ENCODE measurements at regions of chr9 and their contacts with region 1.

Region 1: GRCh38 chr9:72509635-72510034 is 11.8 kb upstream of the TMC1 start:
- DNase-seq: peak; percentile 51
- ATAC-seq: peak; percentile 54
- H3K4me3 ChIP-seq: no peak overlapping the region
- H3K27ac ChIP-seq: no peak overlapping the region
- H3K4me1 ChIP-seq: peaks cover 1% of the 10 kb centered on the region; the same call in 1 of the 2 replicates
- H3K27me3 ChIP-seq: no peaks in the 10 kb centered on the region
- CTCF ChIP-seq: no peak
- POLR2A ChIP-seq: no peak
- RAD21 ChIP-seq: no peak

Region 2: GRCh38 chr9:71518045-71518827 is 991.4 kb before region 1 on chr9:
- CTCF ChIA-PET with region 1: no interaction called
- POLR2A ChIA-PET with region 1: no interaction called
- dilution Hi-C with region 1: no loop called
- in situ Hi-C with region 1: no loop called
- intact Hi-C with region 1: no loop called
- DNase-seq: no peak
- ATAC-seq: no peak
- H3K4me3 ChIP-seq: no peak overlapping the region
- H3K27ac ChIP-seq: no peak overlapping the region
- H3K4me1 ChIP-seq: no peaks in the 10 kb centered on the region
- H3K27me3 ChIP-seq: no peaks in the 10 kb centered on the region
- CTCF ChIP-seq: no peak
- POLR2A ChIP-seq: no peak
- RAD21 ChIP-seq: no peak

Region 3: DNA sequence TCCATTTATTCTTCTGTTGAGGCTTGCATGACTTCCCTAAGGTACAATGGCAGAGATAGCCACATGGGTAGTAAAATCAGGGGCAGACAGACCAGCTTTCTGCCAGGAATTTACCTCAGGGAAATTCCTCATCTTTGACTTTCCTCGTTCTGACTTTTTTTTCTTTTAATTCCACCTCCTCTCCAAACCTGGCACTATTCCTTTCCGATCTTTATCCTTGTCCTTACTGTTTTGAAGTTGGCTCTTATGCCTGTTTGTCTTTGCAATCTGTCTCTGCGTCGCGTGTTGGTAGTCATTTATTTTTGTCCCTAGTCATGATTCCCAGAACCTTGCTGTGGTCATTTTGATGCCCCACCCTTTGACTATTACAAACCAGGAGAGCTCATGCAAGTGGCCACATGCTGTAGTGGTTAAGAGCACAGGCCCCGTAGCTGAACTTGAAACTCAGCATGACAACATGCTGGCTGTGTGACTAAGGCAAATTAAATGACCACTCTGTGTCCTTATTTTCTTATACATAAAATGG is 30.8 kb after region 1 on chr9:
- CTCF ChIA-PET with region 1: no interaction called
- POLR2A ChIA-PET with region 1: no interaction called
- dilution Hi-C with region 1: no loop called
- in situ Hi-C with region 1: no loop called
- intact Hi-C with region 1: loop called (anchors 1 kb)
- DNase-seq: peak; percentile 49
- ATAC-seq: peak; percentile 28; the same call in 1 of the 2 replicates
- H3K4me3 ChIP-seq: no peak overlapping the region
- H3K27ac ChIP-seq: no peak overlapping the region
- H3K4me1 ChIP-seq: no peaks in the 10 kb centered on the region; the same call in 1 of the 2 replicates
- H3K27me3 ChIP-seq: no peaks in the 10 kb centered on the region
- CTCF ChIP-seq: no peak
- POLR2A ChIP-seq: no peak
- RAD21 ChIP-seq: no peak